ENCODE measurements at regions of chr15 and their contacts with region 1.

Region 1: GRCh38 chr15:78108299-78109084 is 16.1 kb downstream of the SH2D7 start:
- DNase-seq: peak; percentile 92
- ATAC-seq: peak; percentile 95

Region 2: DNA sequence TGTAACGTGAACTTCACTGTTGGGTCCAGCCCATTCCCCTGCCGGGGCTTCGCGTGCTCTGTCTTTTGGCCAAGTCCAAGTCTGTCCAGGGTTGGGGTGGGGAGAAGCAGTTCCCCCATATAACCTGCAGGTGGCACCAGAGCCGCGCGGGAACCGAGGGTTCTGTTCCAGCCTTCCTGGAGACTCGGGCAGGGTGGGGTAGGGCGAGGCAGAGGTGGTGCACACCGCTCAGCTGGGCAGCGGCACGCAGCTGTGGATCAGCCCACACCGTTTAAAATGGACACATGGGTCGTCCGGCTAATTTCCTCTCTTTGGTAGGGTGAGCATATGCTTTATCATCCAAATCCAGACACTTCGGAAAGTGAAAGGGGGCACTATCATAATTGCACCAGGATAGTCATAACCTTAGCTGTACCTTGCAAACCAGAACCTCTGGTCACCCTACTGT is 149.0 kb before region 1 on chr15:
- intact Hi-C with region 1: loop called (anchors 2 kb)
- DNase-seq: peak; percentile 86
- ATAC-seq: peak; percentile 99

Region 3: DNA sequence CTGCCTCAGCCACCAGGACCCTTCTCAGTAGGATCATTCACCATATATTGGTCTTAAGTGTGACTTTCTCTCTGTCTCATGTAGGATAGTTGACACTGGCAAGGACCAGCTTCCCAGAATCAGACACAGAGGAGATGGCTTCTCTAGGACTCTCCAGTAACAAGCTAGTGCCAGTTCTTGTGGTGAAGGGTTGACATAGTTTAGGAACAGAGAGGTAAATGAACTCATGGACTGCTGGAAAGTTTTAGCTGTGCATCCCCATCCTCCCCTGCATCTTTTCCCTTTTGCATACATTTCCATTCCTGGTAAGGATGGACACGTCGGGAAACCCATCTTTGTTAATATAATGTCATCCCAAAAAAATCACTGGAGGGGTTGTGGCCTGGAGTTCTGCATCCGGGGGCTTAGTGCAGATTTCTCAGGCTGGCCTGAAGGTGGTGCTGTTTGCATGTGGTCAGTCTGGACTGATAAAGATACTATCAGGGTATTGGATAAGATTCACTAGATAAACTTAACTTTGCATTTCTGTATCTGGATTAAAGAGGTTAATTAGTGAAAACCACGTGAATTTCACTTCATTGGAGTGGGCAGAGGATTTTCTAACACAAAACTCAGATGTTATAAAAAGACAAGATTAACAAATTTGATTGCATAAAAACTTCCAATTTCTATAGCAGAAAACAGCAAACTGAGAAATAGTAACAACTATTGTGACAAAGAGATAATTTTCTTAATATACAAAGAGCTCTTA is 141.8 kb before region 1 on chr15:
- intact Hi-C with region 1: loop called (anchors 2 kb)
- DNase-seq: no peak
- ATAC-seq: peak; percentile 88

Region 4: DNA sequence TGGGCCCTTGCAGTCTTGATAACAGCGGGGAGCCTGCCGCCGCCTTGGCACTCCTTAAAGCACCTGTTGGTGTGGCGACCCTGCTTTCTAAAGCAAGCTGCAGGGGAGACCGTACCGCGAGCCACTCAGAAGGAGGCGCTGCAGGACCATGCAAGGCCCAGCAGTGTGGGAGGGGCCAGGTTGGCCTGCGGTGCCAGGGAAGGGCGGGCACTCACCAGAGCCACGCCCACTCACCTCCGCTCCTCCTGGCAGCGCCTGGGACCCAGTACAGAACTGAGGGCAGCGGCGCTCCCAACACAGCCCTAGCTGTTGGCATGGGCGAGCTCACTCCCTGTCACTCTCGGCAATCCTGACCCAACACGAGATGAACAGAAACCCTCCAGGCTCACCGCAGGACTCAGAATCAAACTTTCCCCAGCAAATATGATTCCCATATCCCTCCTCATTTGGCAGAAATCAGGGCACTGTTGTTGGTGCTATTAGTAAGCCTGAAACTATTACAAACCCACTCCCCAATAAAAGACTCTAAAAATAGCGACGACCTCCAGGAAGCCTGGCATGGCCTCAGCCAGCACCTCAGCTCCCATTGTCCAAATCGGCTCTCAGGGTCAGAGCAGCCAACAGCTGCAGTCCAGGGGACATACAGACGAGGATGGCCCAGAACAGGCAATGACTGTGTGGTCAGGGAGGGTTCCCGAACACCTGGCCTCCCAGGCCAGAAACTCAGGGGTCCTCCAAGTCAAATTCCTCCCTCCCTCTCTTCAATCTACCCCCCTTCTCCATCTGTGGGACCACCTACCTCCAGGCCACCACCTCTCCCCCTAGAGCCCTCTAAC is 108.2 kb before region 1 on chr15:
- intact Hi-C with region 1: loop called (anchors 5 kb)
- DNase-seq: peak; percentile 87
- ATAC-seq: peak; percentile 68

Region 5: GRCh38 chr15:78195735-78196201 is 87.3 kb after region 1 on chr15:
- intact Hi-C with region 1: loop called (anchors 5 kb)
- DNase-seq: no peak
- ATAC-seq: peak; percentile 79

Region 6: GRCh38 chr15:78241007-78241406 is 132.5 kb after region 1 on chr15:
- intact Hi-C with region 1: loop called (anchors 2 kb)
- DNase-seq: peak; percentile 92
- ATAC-seq: peak; percentile 96

Region 7: GRCh38 chr15:78422571-78423340 is 314.3 kb after region 1 on chr15:
- intact Hi-C with region 1: loop called (anchors 10 kb)
- DNase-seq: peak; percentile 75
- ATAC-seq: peak; percentile 77